ENCODE measurements at regions of chr14 and their contacts with region 1.

Region 1: GRCh38 chr14:91418387-91419043 is 895 bp upstream of the CCDC88C start:
- DNase-seq: peak; percentile 84
- H3K4me3 Mint-ChIP-seq: peak overlapping the region; percentile 64
- H3K27ac Mint-ChIP-seq: peak overlapping the region; percentile 74
- H3K4me1 Mint-ChIP-seq: peaks cover 32% of the 10 kb centered on the region
- H3K27me3 Mint-ChIP-seq: no peaks in the 10 kb centered on the region

Region 2: DNA sequence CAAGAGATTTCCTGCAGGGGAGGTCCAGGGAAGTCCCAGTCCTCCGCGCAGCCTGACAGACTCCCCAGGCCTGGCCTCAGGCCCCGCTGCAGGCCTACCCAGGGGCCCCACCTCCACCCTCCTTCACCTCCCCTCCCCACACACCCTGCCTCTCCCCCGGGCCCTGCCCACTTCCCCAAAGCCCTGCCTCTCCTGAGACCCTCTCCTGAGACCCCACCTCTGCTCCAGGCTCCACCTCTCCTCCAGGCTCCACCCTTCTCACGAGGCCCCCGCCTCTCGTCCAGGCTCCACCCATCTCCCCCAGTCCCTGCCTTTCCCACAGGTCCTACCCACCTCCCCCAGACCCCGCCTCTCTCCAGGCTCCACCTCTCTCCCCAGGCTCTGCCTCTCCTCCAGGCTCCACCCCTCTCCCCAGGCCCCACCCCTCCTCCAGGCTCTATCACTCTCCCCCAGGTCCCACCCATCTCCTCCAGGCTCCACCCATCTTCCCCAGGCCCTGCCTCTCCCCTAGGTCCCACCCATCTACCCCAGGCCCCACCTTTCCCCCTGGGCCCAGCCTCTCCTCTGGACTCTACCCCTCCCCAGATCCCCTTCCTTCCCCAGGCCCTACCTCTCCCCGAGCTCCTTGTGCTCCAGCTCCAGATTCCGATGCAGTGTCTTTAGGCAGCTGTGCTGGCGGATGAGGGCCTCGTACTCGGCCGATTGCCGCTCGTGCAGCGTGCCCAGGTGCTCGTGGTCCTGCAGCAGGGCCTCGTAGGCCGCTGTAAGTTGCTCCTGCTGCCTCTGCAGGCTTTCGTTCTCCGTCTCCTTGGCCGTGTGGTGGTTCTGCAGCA is 115.2 kb before region 1 on chr14:
- CTCF ChIA-PET with region 1: interaction called, 7 read pairs
- intact Hi-C with region 1: loop called (anchors 1 kb)
- DNase-seq: peak; percentile 89
- H3K4me3 Mint-ChIP-seq: no peak overlapping the region
- H3K27ac Mint-ChIP-seq: peak overlapping the region; percentile 93
- H3K4me1 Mint-ChIP-seq: peaks cover 58% of the 10 kb centered on the region
- H3K27me3 Mint-ChIP-seq: no peaks in the 10 kb centered on the region

Region 3: GRCh38 chr14:91323671-91324605 is 94.6 kb before region 1 on chr14:
- CTCF ChIA-PET with region 1: interaction called, 99 read pairs
- intact Hi-C with region 1: loop called (anchors 1 kb)
- DNase-seq: peak; percentile 99
- H3K4me3 Mint-ChIP-seq: peak overlapping the region; percentile 83
- H3K27ac Mint-ChIP-seq: peak overlapping the region; percentile 99
- H3K4me1 Mint-ChIP-seq: peaks cover 79% of the 10 kb centered on the region
- H3K27me3 Mint-ChIP-seq: no peaks in the 10 kb centered on the region

Region 4: GRCh38 chr14:91388551-91388975 is 30.0 kb before region 1 on chr14:
- CTCF ChIA-PET with region 1: interaction called, 16 read pairs
- intact Hi-C with region 1: no loop called
- DNase-seq: peak; percentile 69
- H3K4me3 Mint-ChIP-seq: peak overlapping the region; percentile 21
- H3K27ac Mint-ChIP-seq: peak overlapping the region; percentile 63
- H3K4me1 Mint-ChIP-seq: peaks cover 89% of the 10 kb centered on the region
- H3K27me3 Mint-ChIP-seq: no peaks in the 10 kb centered on the region

Region 5: DNA sequence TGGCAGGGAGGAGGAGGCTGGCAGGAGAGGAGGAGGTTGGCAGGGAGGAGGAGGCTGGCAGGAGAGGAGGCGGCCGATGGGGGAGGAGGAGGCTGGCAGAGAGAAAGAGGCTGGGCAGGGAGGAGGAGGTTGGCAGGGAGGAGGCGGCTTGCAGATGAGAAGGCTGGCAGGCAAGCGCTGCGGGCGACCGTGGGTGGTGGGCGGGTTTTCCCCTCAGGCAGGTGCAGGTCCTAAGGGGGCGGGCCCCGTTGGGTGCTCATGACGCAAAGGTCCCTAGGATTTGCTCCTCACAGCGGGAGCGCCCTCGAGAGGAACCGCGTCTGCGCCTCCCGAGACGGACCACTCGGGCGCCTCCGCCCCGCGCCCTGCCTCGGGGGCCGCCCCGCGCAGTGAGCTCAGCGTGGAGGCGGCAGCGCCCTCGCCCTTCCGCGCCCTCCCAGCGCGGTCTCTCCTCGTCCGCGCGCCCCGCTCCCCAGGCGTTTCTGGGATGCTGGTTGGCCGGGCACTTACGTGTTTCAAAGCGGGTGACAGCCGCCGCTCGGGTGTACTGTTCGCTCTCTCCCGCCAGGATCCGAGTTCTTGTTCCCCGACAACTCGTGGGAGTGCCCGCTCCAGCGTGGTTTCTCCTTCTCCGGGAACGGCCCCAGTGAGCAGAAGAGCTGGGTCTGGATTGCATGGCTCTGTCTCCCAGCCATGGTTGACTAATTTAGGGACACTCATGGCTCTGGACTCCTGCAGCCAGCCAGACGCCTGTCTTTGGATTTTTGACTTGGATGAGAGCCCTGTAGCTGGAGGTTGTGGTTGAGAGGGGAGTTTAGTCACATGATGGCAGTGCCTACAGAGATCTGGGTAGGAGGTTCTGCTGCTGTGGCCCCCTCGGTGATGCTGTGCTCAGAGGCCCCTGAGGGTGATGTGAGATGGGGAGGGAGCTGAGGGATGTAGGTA is 155.7 kb after region 1 on chr14:
- CTCF ChIA-PET with region 1: no interaction called
- intact Hi-C with region 1: loop called (anchors 5 kb)
- DNase-seq: peak; percentile 96
- H3K4me3 Mint-ChIP-seq: peak overlapping the region; percentile 74
- H3K27ac Mint-ChIP-seq: no peak overlapping the region
- H3K4me1 Mint-ChIP-seq: peaks cover 13% of the 10 kb centered on the region
- H3K27me3 Mint-ChIP-seq: no peaks in the 10 kb centered on the region